CD14-positive monocyte (primary cell): ENCODE measurements at regions of chr13 and their contacts with region 1.

Region 1: GRCh38 chr13:41652727-41653361 is 195.5 kb downstream of the RGCC start:
- DNase-seq: peak; percentile 43 to 52 (median 50)
- H3K4me3 ChIP-seq: no peak overlapping the region
- H3K4me3 Mint-ChIP-seq: no peak overlapping the region
- H3K27ac ChIP-seq: no peak overlapping the region
- H3K27ac Mint-ChIP-seq: peak overlapping the region in 5 of 7 donors; percentile 7 to 86 (median 70)
- H3K4me1 ChIP-seq: peaks cover 33 to 43% of the 10 kb centered on the region in 2 donors
- H3K4me1 Mint-ChIP-seq: peaks cover 42% of the 10 kb centered on the region
- H3K27me3 ChIP-seq: no peaks in the 10 kb centered on the region
- H3K27me3 Mint-ChIP-seq: peaks cover 0 to 1% (median 0%) of the 10 kb centered on the region in 3 donors
- CTCF ChIP-seq: peak; percentile 83

Region 2: GRCh38 chr13:40596484-40596883 is 1056.4 kb before region 1 on chr13:
- intact Hi-C with region 1: no loop called
- DNase-seq: no peak
- H3K4me3 ChIP-seq: no peak overlapping the region
- H3K4me3 Mint-ChIP-seq: no peak overlapping the region
- H3K27ac ChIP-seq: no peak overlapping the region
- H3K27ac Mint-ChIP-seq: peak overlapping the region in 4 of 7 donors; percentile 26 to 75 (median 54)
- H3K4me1 ChIP-seq: no peaks in the 10 kb centered on the region
- H3K4me1 Mint-ChIP-seq: peaks cover 23% of the 10 kb centered on the region
- H3K27me3 ChIP-seq: no peaks in the 10 kb centered on the region
- H3K27me3 Mint-ChIP-seq: no peaks in the 10 kb centered on the region
- CTCF ChIP-seq: no peak

Region 3: GRCh38 chr13:41060082-41060722 is 592.6 kb before region 1 on chr13:
- intact Hi-C with region 1: no loop called
- DNase-seq: peak; percentile 89 to 94 (median 91)
- H3K4me3 ChIP-seq: peak overlapping the region; percentile 57 to 99 (median 82)
- H3K4me3 Mint-ChIP-seq: peak overlapping the region; percentile 98 to 100
- H3K27ac ChIP-seq: peak overlapping the region; percentile 96
- H3K27ac Mint-ChIP-seq: peak overlapping the region; percentile 98 to 100 (median 100)
- H3K4me1 ChIP-seq: peaks cover 26 to 51% of the 10 kb centered on the region in 2 donors
- H3K4me1 Mint-ChIP-seq: peaks cover 42% of the 10 kb centered on the region
- H3K27me3 ChIP-seq: no peaks in the 10 kb centered on the region
- H3K27me3 Mint-ChIP-seq: peaks cover 0 to 3% (median 3%) of the 10 kb centered on the region in 3 donors
- CTCF ChIP-seq: peak; percentile 16

Region 4: GRCh38 chr13:41352935-41353840 is 299.7 kb before region 1 on chr13:
- intact Hi-C with region 1: loop called in 1 of 2 experiments (anchors 10 kb)
- DNase-seq: peak; percentile 37 to 60 (median 37)
- H3K4me3 ChIP-seq: no peak overlapping the region
- H3K4me3 Mint-ChIP-seq: no peak overlapping the region
- H3K27ac ChIP-seq: peak overlapping the region in 1 of 2 donors; percentile 45
- H3K27ac Mint-ChIP-seq: peak overlapping the region in 3 of 7 donors; percentile 33 to 74 (median 46)
- H3K4me1 ChIP-seq: peaks cover 18 to 25% of the 10 kb centered on the region in 2 donors
- H3K4me1 Mint-ChIP-seq: peaks cover 27% of the 10 kb centered on the region
- H3K27me3 ChIP-seq: no peaks in the 10 kb centered on the region
- H3K27me3 Mint-ChIP-seq: no peaks in the 10 kb centered on the region
- CTCF ChIP-seq: peak; percentile 85

Region 5: DNA sequence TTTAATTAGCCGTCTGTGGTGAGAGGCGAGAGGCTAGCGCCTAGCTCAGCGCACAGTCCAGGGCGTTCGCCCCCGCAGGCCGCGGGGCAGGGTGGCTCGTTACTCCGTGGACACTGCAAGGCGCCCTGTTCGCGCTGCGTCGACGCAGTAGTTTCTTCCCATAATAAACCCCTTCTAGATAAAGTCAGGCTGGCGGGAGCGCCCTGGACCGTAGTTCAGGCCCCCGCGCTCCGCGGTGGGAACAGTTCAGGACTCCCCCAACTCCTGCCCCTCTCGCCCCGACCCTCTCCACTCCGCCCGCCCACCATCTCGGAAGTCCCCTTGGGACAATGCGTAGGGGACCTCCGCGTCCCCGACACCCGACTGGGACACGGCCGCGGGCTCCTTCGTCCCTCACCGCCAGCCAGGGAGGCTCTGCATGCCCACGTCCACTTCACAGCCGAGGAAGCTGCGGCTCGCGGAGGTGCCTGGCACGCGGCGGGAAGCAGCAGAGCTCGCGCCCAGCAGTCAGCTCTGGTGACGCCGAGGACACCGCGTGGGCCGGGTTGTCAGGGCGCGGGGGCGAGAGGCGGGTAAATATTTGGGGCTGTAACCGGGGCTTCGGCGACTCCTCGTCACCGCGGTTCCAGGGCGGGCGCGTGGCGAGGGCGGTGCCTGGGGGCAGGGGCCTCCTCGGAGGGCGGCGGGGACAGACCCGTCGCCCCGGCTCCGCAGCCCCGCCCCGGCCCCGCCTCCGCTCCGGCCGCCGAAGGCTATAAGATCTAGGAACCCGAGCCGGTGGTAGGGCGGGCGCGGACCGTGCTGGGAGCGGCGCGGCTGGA is 195.9 kb before region 1 on chr13 and contains the start of gene RGCC:
- intact Hi-C with region 1: loop called (anchors 5 to 10 kb)
- DNase-seq: peak; percentile 91 to 95 (median 93)
- H3K4me3 ChIP-seq: peak within 1 kb of the TSS; percentile 50 to 92 (median 79)
- H3K4me3 Mint-ChIP-seq: peak within 1 kb of the TSS; percentile 89 to 94
- H3K27ac ChIP-seq: peak within 1 kb of the TSS in 1 of 2 donors; percentile 72
- H3K27ac Mint-ChIP-seq: peak within 1 kb of the TSS; percentile 23 to 93 (median 87)
- H3K4me1 ChIP-seq: peaks cover 41 to 49% of the 10 kb centered on the region in 2 donors
- H3K4me1 Mint-ChIP-seq: peaks cover 43% of the 10 kb centered on the region
- H3K27me3 ChIP-seq: peaks cover 6 to 30% of the 10 kb centered on the region in 2 donors
- H3K27me3 Mint-ChIP-seq: peaks cover 24 to 49% (median 35%) of the 10 kb centered on the region in 3 donors
- CTCF ChIP-seq: no peak
- polyA plus RNA-seq, gene RGCC: 4.3 to 49.5 (median 26.0) TPM

Region 6: DNA sequence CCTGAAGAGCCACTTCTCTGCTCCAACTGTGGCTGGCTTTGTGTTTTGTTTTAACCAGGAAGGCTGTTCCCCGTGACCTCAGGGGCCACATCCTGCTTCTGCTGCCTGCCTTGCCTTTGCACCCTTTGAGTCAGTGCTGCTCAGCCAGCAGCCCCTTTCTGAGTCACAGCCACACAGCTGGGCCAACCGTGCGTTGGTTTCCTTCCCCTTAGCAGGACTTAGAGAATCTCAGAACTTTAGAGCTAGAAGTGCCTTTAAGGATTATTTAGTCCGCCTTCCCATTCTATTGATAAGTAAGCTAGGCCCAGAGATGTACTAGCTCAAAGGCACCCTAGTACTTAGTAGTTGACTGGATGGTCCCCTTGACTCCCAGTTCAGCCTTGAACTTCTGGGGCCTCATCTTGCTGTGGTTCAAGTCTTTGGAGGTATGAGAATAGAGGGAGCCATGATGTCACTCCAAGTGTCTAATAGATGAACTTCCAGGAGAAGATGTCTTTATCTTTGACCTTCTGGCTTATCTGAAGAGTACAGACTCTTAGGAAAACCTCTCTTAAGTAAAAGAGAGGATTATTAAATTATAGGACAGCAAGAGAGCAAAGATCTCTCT is 187.5 kb before region 1 on chr13:
- intact Hi-C with region 1: loop called (anchors 5 to 10 kb)
- DNase-seq: peak; percentile 94 to 97 (median 96)
- H3K4me3 ChIP-seq: peak overlapping the region in 1 of 3 experiments; percentile 22
- H3K4me3 Mint-ChIP-seq: peak overlapping the region in 1 of 2 donors; percentile 67
- H3K27ac ChIP-seq: peak overlapping the region; percentile 78 to 89
- H3K27ac Mint-ChIP-seq: peak overlapping the region; percentile 86 to 99 (median 96)
- H3K4me1 ChIP-seq: peaks cover 49 to 68% of the 10 kb centered on the region in 2 donors
- H3K4me1 Mint-ChIP-seq: peaks cover 64% of the 10 kb centered on the region
- H3K27me3 ChIP-seq: no peaks in the 10 kb centered on the region
- H3K27me3 Mint-ChIP-seq: peaks cover 0 to 2% (median 1%) of the 10 kb centered on the region in 3 donors
- CTCF ChIP-seq: no peak

Region 7: DNA sequence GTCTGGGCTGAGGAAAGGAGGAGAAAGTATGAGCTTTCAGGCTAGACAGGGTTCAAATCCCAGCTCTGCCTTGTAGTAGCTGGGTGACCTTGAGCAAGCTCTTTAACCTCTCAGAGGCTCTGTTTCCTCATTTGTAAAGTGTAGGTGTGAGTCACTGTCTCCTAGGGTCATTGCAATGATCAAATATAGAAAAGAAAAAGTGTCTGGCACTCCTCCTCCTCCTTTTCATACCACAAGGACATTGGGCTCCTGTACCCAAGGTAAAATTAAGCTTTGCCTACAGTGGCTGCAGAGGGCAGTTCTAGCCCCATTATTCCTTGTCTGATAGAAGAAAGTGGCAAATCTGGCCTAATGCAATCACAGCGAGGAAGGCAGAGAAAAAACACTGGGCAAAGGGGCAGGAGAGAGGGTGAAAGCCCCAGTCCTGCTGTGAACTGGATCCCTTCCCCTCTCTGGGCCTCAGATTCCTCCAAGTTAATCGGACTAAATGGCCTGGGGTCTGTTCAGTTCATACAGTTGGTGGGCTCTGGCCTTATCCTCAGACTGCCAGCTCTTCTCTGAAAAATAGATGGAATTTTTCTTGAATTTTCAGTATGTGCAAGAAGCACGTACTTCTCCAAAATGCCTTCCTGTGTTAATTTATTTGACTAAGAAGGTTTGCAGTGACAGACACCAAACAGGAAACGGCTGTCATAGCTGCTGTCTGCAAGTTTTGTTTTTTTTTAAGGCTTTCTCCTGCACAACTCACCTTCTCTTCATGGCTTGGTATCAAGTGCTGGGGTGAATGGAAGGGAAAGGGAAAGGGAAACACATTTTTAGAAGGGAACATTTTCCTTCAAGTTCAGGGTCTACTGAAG is 160.2 kb before region 1 on chr13:
- intact Hi-C with region 1: loop called in 1 of 2 experiments (anchors 10 kb)
- DNase-seq: peak; percentile 68 to 90 (median 89)
- H3K4me3 ChIP-seq: peak overlapping the region in 1 of 3 experiments; percentile 31
- H3K4me3 Mint-ChIP-seq: peak overlapping the region in 1 of 2 donors; percentile 65
- H3K27ac ChIP-seq: peak overlapping the region; percentile 80 to 97
- H3K27ac Mint-ChIP-seq: peak overlapping the region; percentile 86 to 97 (median 93)
- H3K4me1 ChIP-seq: peaks cover 35 to 36% of the 10 kb centered on the region in 2 donors
- H3K4me1 Mint-ChIP-seq: peaks cover 41% of the 10 kb centered on the region
- H3K27me3 ChIP-seq: no peaks in the 10 kb centered on the region
- H3K27me3 Mint-ChIP-seq: peaks cover 2 to 4% (median 3%) of the 10 kb centered on the region in 3 donors
- CTCF ChIP-seq: no peak

Region 8: GRCh38 chr13:41942462-41943094 is 289.7 kb after region 1 on chr13:
- intact Hi-C with region 1: no loop called
- DNase-seq: no peak
- H3K4me3 ChIP-seq: no peak overlapping the region
- H3K4me3 Mint-ChIP-seq: no peak overlapping the region
- H3K27ac ChIP-seq: no peak overlapping the region
- H3K27ac Mint-ChIP-seq: peak overlapping the region in 1 of 7 donors; percentile 12
- H3K4me1 ChIP-seq: no peaks in the 10 kb centered on the region
- H3K4me1 Mint-ChIP-seq: no peaks in the 10 kb centered on the region
- H3K27me3 ChIP-seq: no peaks in the 10 kb centered on the region
- H3K27me3 Mint-ChIP-seq: no peaks in the 10 kb centered on the region
- CTCF ChIP-seq: no peak